GM12878 (cell line): ENCODE measurements at regions of chr18 and their contacts with region 1.

Region 1: GRCh38 chr18:45722899-45723298 is 1.1 kb upstream of the SLC14A1 start:
- DNase-seq: peak; percentile 27
- ATAC-seq: peak; percentile 100
- H3K4me3 ChIP-seq: no peak overlapping the region
- H3K27ac ChIP-seq: no peak overlapping the region
- H3K4me1 ChIP-seq: no peaks in the 10 kb centered on the region
- H3K27me3 ChIP-seq: no peaks in the 10 kb centered on the region
- CTCF ChIP-seq: peak; percentile 74 to 93 (median 77)
- EP300 ChIP-seq: no peak
- POLR2A ChIP-seq: no peak
- RAD21 ChIP-seq: peak; percentile 78

Region 2: DNA sequence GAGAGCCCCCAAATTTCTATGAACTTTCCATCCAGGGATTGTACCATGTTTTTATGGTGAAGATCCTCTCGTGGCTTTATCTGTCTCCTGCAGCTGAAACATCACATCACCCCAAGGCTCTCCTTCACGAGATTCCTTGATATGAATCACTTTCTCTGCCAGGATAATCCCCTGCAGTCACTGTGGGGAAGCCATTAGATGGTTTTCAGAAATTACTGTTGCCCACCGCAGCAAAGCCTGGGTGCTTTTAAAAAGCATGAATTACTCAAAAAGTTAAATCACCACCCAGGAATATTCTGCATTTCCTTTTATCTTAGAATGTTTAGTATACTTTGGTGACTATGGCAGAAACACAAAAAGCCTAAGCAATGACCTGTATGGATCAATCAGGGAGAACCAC is 536.1 kb before region 1 on chr18:
- CTCF ChIA-PET with region 1: no interaction called
- POLR2A ChIA-PET with region 1: no interaction called
- RAD21 ChIA-PET with region 1: no interaction called
- SMC1A ChIA-PET with region 1: no interaction called
- in situ Hi-C with region 1: no loop called
- intact Hi-C with region 1: no loop called
- DNase-seq: no peak
- ATAC-seq: peak; percentile 62
- H3K4me3 ChIP-seq: no peak overlapping the region
- H3K27ac ChIP-seq: no peak overlapping the region
- H3K4me1 ChIP-seq: no peaks in the 10 kb centered on the region
- H3K27me3 ChIP-seq: no peaks in the 10 kb centered on the region
- CTCF ChIP-seq: no peak
- EP300 ChIP-seq: no peak
- POLR2A ChIP-seq: no peak
- RAD21 ChIP-seq: no peak

Region 3: GRCh38 chr18:45802608-45803492 is 80.0 kb after region 1 on chr18:
- CTCF ChIA-PET with region 1: interaction called, 12 read pairs
- POLR2A ChIA-PET with region 1: no interaction called
- RAD21 ChIA-PET with region 1: interaction called, 4 read pairs
- SMC1A ChIA-PET with region 1: interaction called, 8 read pairs
- in situ Hi-C with region 1: no loop called
- intact Hi-C with region 1: no loop called
- DNase-seq: no peak
- ATAC-seq: no peak
- H3K4me3 ChIP-seq: no peak overlapping the region
- H3K27ac ChIP-seq: no peak overlapping the region
- H3K4me1 ChIP-seq: no peaks in the 10 kb centered on the region
- H3K27me3 ChIP-seq: no peaks in the 10 kb centered on the region
- CTCF ChIP-seq: no peak
- EP300 ChIP-seq: no peak
- POLR2A ChIP-seq: no peak
- RAD21 ChIP-seq: no peak

Region 4: GRCh38 chr18:45839414-45840395 is 116.8 kb after region 1 on chr18:
- CTCF ChIA-PET with region 1: interaction called, 3 read pairs
- POLR2A ChIA-PET with region 1: no interaction called
- RAD21 ChIA-PET with region 1: interaction called, 4 read pairs
- SMC1A ChIA-PET with region 1: interaction called, 4 read pairs
- in situ Hi-C with region 1: no loop called
- intact Hi-C with region 1: loop called (anchors 1 kb)
- DNase-seq: no peak
- ATAC-seq: peak; percentile 70
- H3K4me3 ChIP-seq: no peak overlapping the region
- H3K27ac ChIP-seq: no peak overlapping the region
- H3K4me1 ChIP-seq: no peaks in the 10 kb centered on the region
- H3K27me3 ChIP-seq: peaks cover 0 to 4% of the 10 kb centered on the region in 2 experiments; a peak in 1 of 4 replicates
- CTCF ChIP-seq: peak; percentile 31 to 53 (median 44); a peak in 4 of 6 replicates
- EP300 ChIP-seq: no peak
- POLR2A ChIP-seq: no peak
- RAD21 ChIP-seq: peak; percentile 31

Region 5: DNA sequence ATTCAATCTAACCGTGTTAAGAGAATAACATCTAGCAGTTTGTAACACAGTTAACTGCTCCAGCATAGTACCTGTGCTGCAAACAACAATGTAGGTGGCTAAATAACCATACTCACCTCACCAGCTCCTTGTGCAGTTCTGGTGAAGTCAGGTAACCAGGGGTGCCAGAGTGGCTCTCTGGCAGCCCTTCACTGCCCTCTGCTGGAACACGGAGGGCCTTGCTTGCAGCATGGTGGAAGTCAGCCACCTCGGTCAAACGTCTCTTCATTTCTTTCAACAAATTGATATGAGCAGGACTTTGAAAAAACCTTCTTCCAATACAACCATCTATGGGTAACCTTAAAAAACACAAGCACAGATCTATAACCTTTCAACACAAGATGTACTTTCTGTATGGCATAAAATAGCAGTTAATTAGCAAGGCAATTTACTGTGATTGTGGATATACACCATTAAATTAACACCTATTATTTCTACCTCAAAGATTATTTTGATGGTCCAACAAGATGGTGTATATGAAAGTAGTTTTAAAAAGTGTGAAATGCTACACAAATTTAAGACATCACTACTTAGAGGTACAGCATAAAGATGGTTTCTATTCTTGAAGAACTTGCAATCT is 187.6 kb after region 1 on chr18:
- CTCF ChIA-PET with region 1: interaction called, 15 read pairs
- POLR2A ChIA-PET with region 1: no interaction called
- RAD21 ChIA-PET with region 1: no interaction called
- SMC1A ChIA-PET with region 1: no interaction called
- in situ Hi-C with region 1: no loop called
- intact Hi-C with region 1: no loop called
- DNase-seq: peak; percentile 2
- ATAC-seq: peak; percentile 95
- H3K4me3 ChIP-seq: no peak overlapping the region
- H3K27ac ChIP-seq: no peak overlapping the region
- H3K4me1 ChIP-seq: no peaks in the 10 kb centered on the region
- H3K27me3 ChIP-seq: no peaks in the 10 kb centered on the region
- CTCF ChIP-seq: peak; percentile 71 to 81 (median 74)
- EP300 ChIP-seq: no peak
- POLR2A ChIP-seq: no peak
- RAD21 ChIP-seq: peak; percentile 66

Region 6: GRCh38 chr18:45974088-45974536 is 251.2 kb after region 1 on chr18:
- CTCF ChIA-PET with region 1: interaction called, 9 read pairs
- POLR2A ChIA-PET with region 1: no interaction called
- RAD21 ChIA-PET with region 1: no interaction called
- SMC1A ChIA-PET with region 1: interaction called, 5 read pairs
- in situ Hi-C with region 1: no loop called
- intact Hi-C with region 1: loop called (anchors 1 kb)
- DNase-seq: peak; percentile 32
- ATAC-seq: peak; percentile 90
- H3K4me3 ChIP-seq: no peak overlapping the region
- H3K27ac ChIP-seq: no peak overlapping the region
- H3K4me1 ChIP-seq: no peaks in the 10 kb centered on the region
- H3K27me3 ChIP-seq: no peaks in the 10 kb centered on the region
- CTCF ChIP-seq: peak; percentile 57 to 87 (median 64); a peak in 5 of 6 replicates
- EP300 ChIP-seq: no peak
- POLR2A ChIP-seq: no peak
- RAD21 ChIP-seq: peak; percentile 93